ENCODE measurements at regions of chr2 and their contacts with region 1.

Region 1: GRCh38 chr2:224650815-224651439 is 65.2 kb downstream of the CCDC195 start:
- DNase-seq: peak; percentile 23
- ATAC-seq: peak; percentile 60
- H3K4me3 Mint-ChIP-seq: no peak overlapping the region
- H3K27ac Mint-ChIP-seq: no peak overlapping the region
- H3K4me1 Mint-ChIP-seq: no peaks in the 10 kb centered on the region
- H3K27me3 Mint-ChIP-seq: peaks cover 5% of the 10 kb centered on the region

Region 2: GRCh38 chr2:224357098-224357901 is 293.6 kb before region 1 on chr2:
- CTCF ChIA-PET with region 1: interaction called, 26 read pairs
- POLR2A ChIA-PET with region 1: no interaction called
- DNase-seq: peak; percentile 71
- ATAC-seq: peak; percentile 69
- H3K4me3 Mint-ChIP-seq: no peak overlapping the region
- H3K27ac Mint-ChIP-seq: no peak overlapping the region
- H3K4me1 Mint-ChIP-seq: no peaks in the 10 kb centered on the region
- H3K27me3 Mint-ChIP-seq: peaks cover 8% of the 10 kb centered on the region

Region 3: GRCh38 chr2:224369028-224369632 is 281.8 kb before region 1 on chr2:
- CTCF ChIA-PET with region 1: interaction called, 17 read pairs
- POLR2A ChIA-PET with region 1: no interaction called
- DNase-seq: peak; percentile 34
- ATAC-seq: no peak
- H3K4me3 Mint-ChIP-seq: no peak overlapping the region
- H3K27ac Mint-ChIP-seq: no peak overlapping the region
- H3K4me1 Mint-ChIP-seq: no peaks in the 10 kb centered on the region
- H3K27me3 Mint-ChIP-seq: peaks cover 4% of the 10 kb centered on the region

Region 4: GRCh38 chr2:224585205-224586088 is 65.5 kb before region 1 on chr2 and contains the start of gene CUL3:
- CTCF ChIA-PET with region 1: interaction called, 10 read pairs
- POLR2A ChIA-PET with region 1: no interaction called
- DNase-seq: peak; percentile 100
- ATAC-seq: peak; percentile 87
- H3K4me3 Mint-ChIP-seq: peak within 1 kb of the TSS; percentile 98
- H3K27ac Mint-ChIP-seq: peak within 1 kb of the TSS; percentile 97
- H3K4me1 Mint-ChIP-seq: peaks cover 43% of the 10 kb centered on the region
- H3K27me3 Mint-ChIP-seq: no peaks in the 10 kb centered on the region
- total RNA-seq, gene CUL3: 77.9 to 82.0 TPM

Region 5: DNA sequence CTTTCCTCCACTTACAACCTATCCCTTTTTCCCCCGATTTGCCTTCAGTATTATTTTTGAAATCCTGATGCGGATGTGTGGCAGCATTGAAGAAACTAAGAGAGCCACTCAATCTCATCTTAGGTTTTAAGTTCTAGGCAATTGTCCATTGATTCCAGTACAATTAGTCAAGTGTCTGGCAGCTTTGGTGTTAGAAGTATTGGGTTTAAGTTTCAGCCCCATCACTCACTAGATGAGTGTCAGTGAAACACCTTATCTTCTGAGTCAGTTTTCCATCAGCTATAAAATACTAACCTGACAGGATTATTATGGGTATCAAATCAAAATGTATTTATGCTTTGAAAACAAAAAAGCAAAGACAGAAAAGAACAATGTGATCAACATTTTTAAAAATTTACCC is 49.0 kb before region 1 on chr2:
- CTCF ChIA-PET with region 1: interaction called, 10 read pairs
- POLR2A ChIA-PET with region 1: no interaction called
- DNase-seq: no peak
- ATAC-seq: no peak
- H3K4me3 Mint-ChIP-seq: no peak overlapping the region
- H3K27ac Mint-ChIP-seq: no peak overlapping the region
- H3K4me1 Mint-ChIP-seq: peaks cover 10% of the 10 kb centered on the region
- H3K27me3 Mint-ChIP-seq: peaks cover 4% of the 10 kb centered on the region